ENCODE measurements at regions of chr17 and their contacts with region 1.

Region 1: GRCh38 chr17:53313746-53314145 is 509.0 kb upstream of the KIF2B start:
- DNase-seq: no peak
- H3K4me3 ChIP-seq: no peak overlapping the region
- H3K27ac ChIP-seq: no peak overlapping the region
- H3K4me1 ChIP-seq: no peaks in the 10 kb centered on the region
- H3K27me3 ChIP-seq: no peaks in the 10 kb centered on the region
- CTCF ChIP-seq: no peak
- POLR2A ChIP-seq: no peak

Region 2: GRCh38 chr17:53100126-53100525 is 213.6 kb before region 1 on chr17:
- intact Hi-C with region 1: loop called in 1 of 2 experiments (anchors 5 kb)
- DNase-seq: no peak
- H3K4me3 ChIP-seq: no peak overlapping the region
- H3K27ac ChIP-seq: no peak overlapping the region
- H3K4me1 ChIP-seq: no peaks in the 10 kb centered on the region
- H3K27me3 ChIP-seq: no peaks in the 10 kb centered on the region
- CTCF ChIP-seq: no peak
- POLR2A ChIP-seq: no peak

Region 3: DNA sequence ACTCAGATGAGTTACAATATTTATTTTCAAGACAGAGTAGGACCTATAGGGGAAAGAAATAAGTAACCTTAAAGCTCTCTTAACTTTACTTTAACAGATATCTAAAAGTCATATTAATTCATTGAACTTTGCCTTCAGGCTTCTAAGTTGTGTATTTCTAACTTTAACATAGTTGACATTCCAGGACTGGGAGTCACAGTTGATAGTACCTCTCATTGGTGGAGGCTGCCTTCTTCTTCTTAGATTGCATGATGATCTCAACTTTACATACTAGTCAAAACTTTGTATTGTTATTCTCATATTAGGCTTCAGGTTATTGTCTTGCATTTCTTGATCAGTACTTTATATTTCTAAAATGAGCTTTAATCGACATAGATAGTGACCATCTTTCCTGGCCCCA is 158.8 kb after region 1 on chr17:
- intact Hi-C with region 1: no loop called
- DNase-seq: no peak
- H3K4me3 ChIP-seq: no peak overlapping the region
- H3K27ac ChIP-seq: no peak overlapping the region
- H3K4me1 ChIP-seq: no peaks in the 10 kb centered on the region
- H3K27me3 ChIP-seq: no peaks in the 10 kb centered on the region
- CTCF ChIP-seq: no peak
- POLR2A ChIP-seq: no peak